Activated CD4-positive, alpha-beta T cell treated with anti-CD3 and anti-CD28 coated beads for 36 hours (primary cell): ENCODE measurements at regions of chr10 and their contacts with region 1.

Region 1: DNA sequence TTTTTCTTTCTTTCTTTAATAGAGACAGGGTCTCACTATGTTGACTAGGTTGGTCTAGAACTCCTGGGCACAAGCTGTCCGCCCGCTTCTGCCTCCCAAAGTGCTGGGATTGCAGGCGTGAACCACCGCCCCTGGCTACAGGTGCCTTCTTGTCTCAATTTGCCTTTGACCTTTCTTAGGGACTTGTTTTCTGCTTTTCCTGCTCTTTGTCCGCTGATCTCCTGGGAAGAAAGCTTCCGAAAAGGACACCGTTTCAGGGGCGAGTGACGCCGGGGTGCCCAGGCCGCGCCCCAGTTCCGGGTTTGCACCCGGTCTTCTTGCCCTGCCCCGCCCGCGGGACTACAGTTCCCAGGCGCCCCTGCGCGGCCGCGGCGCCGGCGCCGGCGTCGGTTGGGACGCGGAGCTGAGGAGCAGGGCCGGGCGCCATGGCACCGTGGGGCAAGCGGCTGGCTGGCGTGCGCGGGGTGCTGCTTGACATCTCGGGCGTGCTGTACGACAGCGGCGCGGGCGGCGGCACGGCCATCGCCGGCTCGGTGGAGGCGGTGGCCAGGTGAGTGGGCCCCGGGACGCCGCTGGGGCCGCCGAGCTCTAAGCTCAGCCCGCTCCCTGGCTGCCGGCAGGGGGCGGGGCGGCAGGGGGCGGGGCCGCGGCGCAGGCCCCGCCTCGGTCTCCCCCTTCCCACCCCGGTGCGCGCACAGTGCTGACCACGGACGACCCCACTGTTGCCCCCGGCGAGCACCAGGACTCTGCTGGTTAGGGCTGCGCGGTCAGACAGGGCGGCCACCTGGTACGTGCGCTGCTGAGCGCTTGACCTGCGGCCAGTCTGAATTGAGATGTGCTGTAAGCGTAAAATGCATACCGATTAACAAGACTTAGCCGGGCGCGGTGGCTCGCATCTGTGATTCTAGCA is at the start of gene LHPP:
- DNase-seq: peak; percentile 92
- ATAC-seq: peak; percentile 97
- H3K4me3 Mint-ChIP-seq: peak within 1 kb of the TSS; percentile 71
- H3K27ac Mint-ChIP-seq: peak within 1 kb of the TSS; percentile 96
- H3K4me1 Mint-ChIP-seq: peaks cover 25% of the 10 kb centered on the region
- H3K27me3 Mint-ChIP-seq: peaks cover 2% of the 10 kb centered on the region
- total RNA-seq, gene LHPP: 11.5 to 14.0 TPM

Region 2: GRCh38 chr10:124231168-124232155 is 230.2 kb before region 1 on chr10:
- CTCF ChIA-PET with region 1: no interaction called
- POLR2A ChIA-PET with region 1: no interaction called
- intact Hi-C with region 1: loop called in 1 of 2 experiments (anchors 5 kb)
- DNase-seq: peak; percentile 85
- ATAC-seq: peak; percentile 65
- H3K4me3 Mint-ChIP-seq: peak overlapping the region; percentile 31
- H3K27ac Mint-ChIP-seq: no peak overlapping the region
- H3K4me1 Mint-ChIP-seq: no peaks in the 10 kb centered on the region
- H3K27me3 Mint-ChIP-seq: no peaks in the 10 kb centered on the region

Region 3: GRCh38 chr10:124791378-124792348 is 330.0 kb after region 1 on chr10 and contains the start of gene EEF1AKMT2:
- CTCF ChIA-PET with region 1: interaction called, 7 read pairs
- POLR2A ChIA-PET with region 1: no interaction called
- intact Hi-C with region 1: loop called in 1 of 2 experiments (anchors 1 kb)
- DNase-seq: peak; percentile 91
- ATAC-seq: peak; percentile 93
- H3K4me3 Mint-ChIP-seq: peak within 1 kb of the TSS; percentile 98
- H3K27ac Mint-ChIP-seq: peak within 1 kb of the TSS; percentile 90
- H3K4me1 Mint-ChIP-seq: peaks cover 16% of the 10 kb centered on the region
- H3K27me3 Mint-ChIP-seq: no peaks in the 10 kb centered on the region
- total RNA-seq, gene EEF1AKMT2: 21.4 to 28.4 TPM

Region 4: GRCh38 chr10:125719146-125720001 is 1257.7 kb after region 1 on chr10 and contains the start of gene EDRF1:
- CTCF ChIA-PET with region 1: no interaction called
- POLR2A ChIA-PET with region 1: no interaction called
- intact Hi-C with region 1: loop called in 1 of 2 experiments (anchors 5 kb)
- DNase-seq: peak; percentile 99
- ATAC-seq: peak; percentile 97
- H3K4me3 Mint-ChIP-seq: peak within 1 kb of the TSS; percentile 82
- H3K27ac Mint-ChIP-seq: peak within 1 kb of the TSS; percentile 92
- H3K4me1 Mint-ChIP-seq: peaks cover 26% of the 10 kb centered on the region
- H3K27me3 Mint-ChIP-seq: no peaks in the 10 kb centered on the region
- total RNA-seq, gene EDRF1: 29.6 to 30.8 TPM